Head of caudate nucleus (tissue), 42 donors: ENCODE measurements at regions of chr3 and their contacts with region 1.

Region 1: DNA sequence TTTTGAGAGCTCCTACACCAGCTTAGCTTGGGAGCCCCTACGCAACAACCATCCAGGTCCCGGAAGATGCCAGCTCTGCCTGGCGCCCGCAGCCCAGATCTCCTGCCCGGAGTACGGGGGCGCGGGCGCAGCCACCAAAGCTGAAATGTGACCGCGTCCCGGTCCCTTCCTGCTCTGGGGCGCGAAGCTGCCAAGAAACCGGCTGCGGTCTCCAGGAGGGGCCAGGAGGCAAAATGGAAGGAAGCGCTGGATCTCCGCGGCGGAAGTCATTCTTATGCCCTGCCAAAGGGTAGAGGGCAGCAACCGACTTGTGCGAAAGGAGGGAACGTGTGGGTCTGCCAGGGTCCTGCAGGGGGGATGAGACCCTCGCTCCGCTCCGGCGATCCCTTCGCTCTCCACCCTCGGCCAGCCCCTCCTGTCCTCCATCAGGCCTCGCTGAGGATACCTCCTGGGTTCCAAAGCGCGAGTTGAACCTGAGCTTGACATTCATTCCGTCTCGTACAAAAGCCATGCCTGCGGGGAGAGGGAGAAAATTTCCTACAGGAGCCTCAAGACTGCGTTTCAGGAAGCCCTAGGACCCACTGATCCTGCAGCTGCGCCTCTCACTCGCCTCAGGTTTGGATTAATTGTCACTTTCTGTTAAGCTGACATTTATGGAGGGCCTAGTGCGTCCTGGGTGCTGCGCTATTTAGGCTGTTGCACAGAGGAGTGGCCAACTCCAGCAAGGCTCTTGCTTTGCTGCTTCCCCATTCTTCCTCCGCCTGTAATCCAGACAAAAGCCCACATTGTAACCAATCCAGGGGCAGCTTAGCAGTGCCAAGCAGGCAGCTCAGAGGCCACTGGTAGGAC is 98.3 kb upstream of the VGLL3 start:
- DNase-seq: peak; percentile 61 to 92 (median 79)

Region 2: GRCh38 chr3:86785386-86785785 is 303.8 kb before region 1 on chr3:
- intact Hi-C with region 1: loop called (anchors 5 kb)
- DNase-seq: no peak

Region 3: GRCh38 chr3:87101861-87102625 is 12.8 kb after region 1 on chr3:
- intact Hi-C with region 1: no loop called
- DNase-seq: no peak